CD4-positive, alpha-beta memory T cell (primary cell): ENCODE measurements at regions of chr14 and their contacts with region 1.

Region 1: GRCh38 chr14:56474419-56475022 is 105.1 kb upstream of the TMEM260 start:
- DNase-seq: peak in 4 of 5 donors; percentile 30 to 44 (median 38)
- H3K4me3 ChIP-seq: no peak overlapping the region
- H3K4me3 Mint-ChIP-seq: no peak overlapping the region
- H3K27ac ChIP-seq: no peak overlapping the region
- H3K27ac Mint-ChIP-seq: no peak overlapping the region
- H3K4me1 ChIP-seq: no peaks in the 10 kb centered on the region
- H3K4me1 Mint-ChIP-seq: no peaks in the 10 kb centered on the region
- H3K27me3 ChIP-seq: no peaks in the 10 kb centered on the region
- H3K27me3 Mint-ChIP-seq: peaks cover 5 to 7% of the 10 kb centered on the region in 2 donors

Region 2: DNA sequence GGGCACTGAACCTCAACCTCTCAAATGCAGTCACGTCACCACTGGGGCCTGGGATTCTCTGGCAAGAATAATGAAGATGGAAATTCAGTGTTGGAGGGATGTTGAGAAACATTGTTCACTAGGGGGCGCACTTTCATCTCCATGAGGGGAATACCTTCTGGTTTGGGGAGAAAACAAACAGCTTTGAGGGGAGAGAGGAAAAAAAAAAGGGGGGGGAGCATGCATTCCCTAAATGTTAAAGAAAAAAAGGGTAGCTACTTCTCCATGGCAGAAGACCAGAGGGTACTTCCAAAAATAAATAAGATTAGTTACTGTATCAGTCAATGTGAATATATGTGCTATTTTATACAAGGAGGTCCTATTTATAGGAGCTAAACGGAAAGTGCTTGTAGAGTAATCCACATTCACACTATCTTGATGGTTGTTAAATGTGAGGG is 1028.3 kb before region 1 on chr14:
- CTCF ChIA-PET with region 1: interaction called, 39 read pairs
- POLR2A ChIA-PET with region 1: no interaction called
- intact Hi-C with region 1: loop called (anchors 1 kb)
- DNase-seq: peak; percentile 40 to 57 (median 53)
- H3K4me3 ChIP-seq: no peak overlapping the region
- H3K4me3 Mint-ChIP-seq: no peak overlapping the region
- H3K27ac ChIP-seq: no peak overlapping the region
- H3K27ac Mint-ChIP-seq: no peak overlapping the region
- H3K4me1 ChIP-seq: no peaks in the 10 kb centered on the region
- H3K4me1 Mint-ChIP-seq: peaks cover 0 to 3% (median 1%) of the 10 kb centered on the region in 4 donors
- H3K27me3 ChIP-seq: no peaks in the 10 kb centered on the region
- H3K27me3 Mint-ChIP-seq: peaks cover 0 to 1% of the 10 kb centered on the region in 2 donors

Region 3: DNA sequence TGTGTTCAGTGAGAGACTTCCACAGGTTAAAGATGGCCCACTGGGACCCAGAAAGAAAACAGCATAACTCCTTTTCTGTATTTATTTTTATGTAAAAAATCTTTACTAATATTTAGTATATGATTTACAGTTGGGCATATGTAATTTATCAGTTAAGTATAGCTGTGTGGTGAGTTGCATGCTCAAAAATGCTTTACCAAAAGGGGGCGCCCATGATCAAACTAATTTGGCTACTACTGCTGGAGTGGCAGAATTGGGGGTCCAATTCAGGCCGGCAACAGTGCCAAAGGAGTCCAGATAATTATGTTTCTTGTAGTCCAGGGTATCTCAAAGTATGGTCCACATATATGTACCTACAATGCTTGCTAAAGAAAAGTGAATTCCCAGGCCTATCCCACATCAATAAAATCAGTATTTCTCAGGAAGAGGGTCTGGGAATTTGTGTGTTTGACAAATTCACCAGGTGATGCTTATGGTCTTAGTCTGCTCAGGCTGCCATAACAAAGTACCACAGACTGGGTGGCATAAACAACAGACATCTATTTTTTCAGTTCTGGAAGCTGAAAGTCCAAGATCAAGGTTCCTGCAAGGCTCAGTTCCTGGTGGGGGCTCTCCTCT is 742.5 kb before region 1 on chr14:
- CTCF ChIA-PET with region 1: interaction called, 116 read pairs
- POLR2A ChIA-PET with region 1: interaction called, 3 read pairs
- intact Hi-C with region 1: loop called (anchors 1 kb)
- DNase-seq: peak; percentile 38 to 53 (median 49)
- H3K4me3 ChIP-seq: no peak overlapping the region
- H3K4me3 Mint-ChIP-seq: no peak overlapping the region
- H3K27ac ChIP-seq: no peak overlapping the region
- H3K27ac Mint-ChIP-seq: peak overlapping the region in 2 of 7 donors; percentile 62 to 76
- H3K4me1 ChIP-seq: peaks cover 11% of the 10 kb centered on the region
- H3K4me1 Mint-ChIP-seq: peaks cover 4 to 13% (median 7%) of the 10 kb centered on the region in 4 donors
- H3K27me3 ChIP-seq: no peaks in the 10 kb centered on the region
- H3K27me3 Mint-ChIP-seq: no peaks in the 10 kb centered on the region

Region 4: GRCh38 chr14:56390859-56391258 is 83.7 kb before region 1 on chr14:
- CTCF ChIA-PET with region 1: no interaction called
- POLR2A ChIA-PET with region 1: no interaction called
- intact Hi-C with region 1: no loop called
- DNase-seq: no peak
- H3K4me3 ChIP-seq: no peak overlapping the region
- H3K4me3 Mint-ChIP-seq: no peak overlapping the region
- H3K27ac ChIP-seq: no peak overlapping the region
- H3K27ac Mint-ChIP-seq: no peak overlapping the region
- H3K4me1 ChIP-seq: no peaks in the 10 kb centered on the region
- H3K4me1 Mint-ChIP-seq: no peaks in the 10 kb centered on the region
- H3K27me3 ChIP-seq: no peaks in the 10 kb centered on the region
- H3K27me3 Mint-ChIP-seq: peaks cover 0 to 6% of the 10 kb centered on the region in 2 donors

Region 5: GRCh38 chr14:56463271-56463890 is 11.1 kb before region 1 on chr14:
- CTCF ChIA-PET with region 1: interaction called, 44 read pairs
- POLR2A ChIA-PET with region 1: no interaction called
- intact Hi-C with region 1: no loop called
- DNase-seq: no peak
- H3K4me3 ChIP-seq: no peak overlapping the region
- H3K4me3 Mint-ChIP-seq: no peak overlapping the region
- H3K27ac ChIP-seq: no peak overlapping the region
- H3K27ac Mint-ChIP-seq: no peak overlapping the region
- H3K4me1 ChIP-seq: no peaks in the 10 kb centered on the region
- H3K4me1 Mint-ChIP-seq: no peaks in the 10 kb centered on the region
- H3K27me3 ChIP-seq: no peaks in the 10 kb centered on the region
- H3K27me3 Mint-ChIP-seq: peaks cover 21 to 31% of the 10 kb centered on the region in 2 donors